Spleen (tissue), 13 donors: ENCODE measurements at regions of chr6 and their contacts with region 1.

Region 1: DNA sequence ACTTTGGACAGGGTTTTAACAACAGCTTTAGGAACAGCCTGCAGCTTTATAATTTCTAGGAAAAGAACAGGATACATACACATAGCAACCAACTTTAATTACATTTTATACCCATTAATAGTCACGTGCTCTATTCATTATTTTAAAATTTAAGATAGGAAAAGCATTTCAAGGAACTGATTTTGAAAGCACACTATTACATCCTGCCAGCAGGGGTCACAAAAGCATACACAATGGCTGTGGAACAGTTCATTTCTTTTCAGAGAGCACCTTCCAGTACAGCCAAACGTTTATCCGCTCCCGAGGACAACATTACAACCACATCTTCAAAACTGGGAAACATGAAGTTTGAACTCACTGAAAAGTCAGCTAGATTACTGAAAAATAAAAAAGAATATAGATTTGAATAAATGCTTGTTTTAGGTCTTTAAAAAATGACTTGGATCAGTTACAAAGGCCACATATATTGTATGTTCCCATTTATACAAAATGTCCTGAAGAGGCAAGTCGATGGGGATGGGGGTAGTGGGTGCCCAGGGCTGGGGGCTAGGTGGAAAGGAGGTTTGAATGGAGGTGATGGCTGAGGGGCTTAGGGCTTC is 104.6 kb upstream of the EXOC2 start:
- DNase-seq: no peak
- H3K4me3 ChIP-seq: no peak overlapping the region
- H3K27ac ChIP-seq: no peak overlapping the region
- H3K4me1 ChIP-seq: peaks cover 0 to 4% (median 0%) of the 10 kb centered on the region in 6 donors
- H3K27me3 ChIP-seq: peaks cover 0 to 70% (median 21%) of the 10 kb centered on the region in 7 donors
- CTCF ChIP-seq: peak; percentile 42 to 76 (median 68)
- POLR2A ChIP-seq: no peak

Region 2: DNA sequence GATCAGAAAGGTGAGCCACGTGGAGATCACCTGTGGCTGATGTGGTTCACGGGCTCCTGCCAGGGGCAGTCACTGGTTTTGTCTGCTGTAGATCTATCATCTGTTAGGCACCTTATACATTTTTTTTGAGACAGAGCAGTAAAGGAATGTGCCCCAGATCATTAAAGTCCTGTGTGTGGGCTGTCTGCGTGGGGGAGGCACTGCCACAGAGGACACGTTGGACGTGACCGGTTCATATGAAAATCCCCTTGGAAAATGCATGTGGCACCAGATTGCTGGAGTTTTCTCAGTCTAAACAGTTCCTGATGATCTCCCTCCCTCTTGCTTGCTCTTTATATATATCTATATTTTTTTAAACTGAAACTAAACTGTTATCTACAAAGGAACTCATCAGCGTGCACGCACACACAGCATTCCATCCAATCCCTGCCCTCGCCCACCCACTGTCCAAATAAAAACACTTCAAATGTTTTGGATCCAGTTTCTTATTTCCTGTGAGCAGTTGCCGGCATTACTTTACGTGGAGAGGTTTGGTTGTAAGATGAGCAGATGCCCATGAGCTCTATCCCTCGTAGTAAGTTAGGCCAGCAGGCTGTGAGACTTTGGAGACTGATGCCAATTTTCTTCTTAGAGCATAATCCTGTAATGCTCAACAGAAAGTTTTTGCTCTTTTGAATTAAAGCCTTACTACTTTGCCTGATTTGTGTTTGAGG is 57.0 kb after region 1 on chr6:
- intact Hi-C with region 1: no loop called
- DNase-seq: no peak
- H3K4me3 ChIP-seq: no peak overlapping the region
- H3K27ac ChIP-seq: no peak overlapping the region
- H3K4me1 ChIP-seq: no peaks in the 10 kb centered on the region
- H3K27me3 ChIP-seq: peaks cover 0 to 8% (median 0%) of the 10 kb centered on the region in 7 donors
- CTCF ChIP-seq: no peak
- POLR2A ChIP-seq: no peak

Region 3: DNA sequence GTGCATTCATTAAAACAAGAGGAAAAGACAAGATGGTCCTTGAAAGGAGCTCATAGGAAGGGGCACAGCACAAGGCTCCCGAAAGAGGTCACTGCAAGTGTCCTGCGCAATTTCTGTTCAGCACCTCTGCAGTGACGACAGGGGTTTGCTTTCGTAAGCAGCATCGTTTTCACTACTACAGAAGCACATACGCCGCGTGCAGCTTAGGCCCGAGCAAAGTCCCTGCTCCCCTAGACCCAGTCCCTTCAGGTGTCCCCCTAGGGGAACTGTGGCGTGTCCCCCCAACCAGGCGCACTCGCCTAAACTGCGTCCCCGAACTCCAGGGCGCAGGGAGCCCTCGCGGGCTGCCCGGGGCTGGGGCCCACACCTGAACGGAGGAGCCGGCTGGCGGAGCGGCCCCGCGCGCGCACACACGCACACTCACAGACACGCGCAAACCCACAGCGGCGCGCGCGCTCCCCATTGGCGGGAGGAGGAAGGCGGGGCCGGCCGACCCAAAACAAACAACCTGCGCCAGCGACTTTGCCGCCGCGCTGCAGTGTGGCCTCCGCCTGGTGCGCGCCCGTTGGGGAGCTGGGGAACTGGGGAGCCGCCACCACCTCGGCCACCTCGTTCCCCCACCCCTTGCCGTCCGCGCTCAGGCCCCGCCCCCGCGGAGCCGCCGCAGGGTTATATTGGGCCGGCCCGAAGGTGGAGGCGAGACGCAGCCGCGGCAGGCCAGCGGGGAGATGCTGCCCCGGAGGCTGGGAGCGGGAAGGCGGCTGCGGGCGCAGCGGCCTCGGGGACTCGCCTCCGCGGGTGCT is 514.0 kb after region 1 on chr6 and contains the start of gene FOXQ1:
- intact Hi-C with region 1: loop called (anchors 10 kb)
- DNase-seq: peak; percentile 56
- H3K4me3 ChIP-seq: peak within 1 kb of the TSS; percentile 18 to 68 (median 47)
- H3K27ac ChIP-seq: no peak within 1 kb of the TSS
- H3K4me1 ChIP-seq: peaks cover 17 to 46% (median 34%) of the 10 kb centered on the region in 6 donors
- H3K27me3 ChIP-seq: peaks cover 2 to 95% (median 76%) of the 10 kb centered on the region in 7 donors
- CTCF ChIP-seq: no peak
- POLR2A ChIP-seq: no peak
- total RNA-seq, gene FOXQ1: 0.10 to 0.21 (median 0.20) TPM in 3 of 7 donors, not detected in the others

Region 4: GRCh38 chr6:1381481-1382330 is 584.1 kb after region 1 on chr6:
- intact Hi-C with region 1: loop called (anchors 5 kb)
- DNase-seq: peak; percentile 83
- H3K4me3 ChIP-seq: peak overlapping the region in 7 of 8 donors; percentile 20 to 65 (median 26)
- H3K27ac ChIP-seq: no peak overlapping the region
- H3K4me1 ChIP-seq: peaks cover 30 to 85% (median 67%) of the 10 kb centered on the region in 6 donors
- H3K27me3 ChIP-seq: peaks cover 22 to 100% (median 100%) of the 10 kb centered on the region in 7 donors
- CTCF ChIP-seq: peak; percentile 30 to 89 (median 63)
- POLR2A ChIP-seq: no peak